ENCODE measurements at regions of chr1 and their contacts with region 1.

Region 1: GRCh38 chr1:155227261-155228095 is 19.0 kb downstream of the MTX1 start:
- DNase-seq: peak; percentile 96 to 100 (median 99)
- H3K4me3 ChIP-seq: peak overlapping the region in 6 of 7 experiments; percentile 68 to 85 (median 76)
- H3K27ac ChIP-seq: peak overlapping the region; percentile 74 to 85
- H3K4me1 ChIP-seq: peaks cover 8 to 43% (median 37%) of the 10 kb centered on the region in 4 experiments
- H3K27me3 ChIP-seq: no peaks in the 10 kb centered on the region

Region 2: DNA sequence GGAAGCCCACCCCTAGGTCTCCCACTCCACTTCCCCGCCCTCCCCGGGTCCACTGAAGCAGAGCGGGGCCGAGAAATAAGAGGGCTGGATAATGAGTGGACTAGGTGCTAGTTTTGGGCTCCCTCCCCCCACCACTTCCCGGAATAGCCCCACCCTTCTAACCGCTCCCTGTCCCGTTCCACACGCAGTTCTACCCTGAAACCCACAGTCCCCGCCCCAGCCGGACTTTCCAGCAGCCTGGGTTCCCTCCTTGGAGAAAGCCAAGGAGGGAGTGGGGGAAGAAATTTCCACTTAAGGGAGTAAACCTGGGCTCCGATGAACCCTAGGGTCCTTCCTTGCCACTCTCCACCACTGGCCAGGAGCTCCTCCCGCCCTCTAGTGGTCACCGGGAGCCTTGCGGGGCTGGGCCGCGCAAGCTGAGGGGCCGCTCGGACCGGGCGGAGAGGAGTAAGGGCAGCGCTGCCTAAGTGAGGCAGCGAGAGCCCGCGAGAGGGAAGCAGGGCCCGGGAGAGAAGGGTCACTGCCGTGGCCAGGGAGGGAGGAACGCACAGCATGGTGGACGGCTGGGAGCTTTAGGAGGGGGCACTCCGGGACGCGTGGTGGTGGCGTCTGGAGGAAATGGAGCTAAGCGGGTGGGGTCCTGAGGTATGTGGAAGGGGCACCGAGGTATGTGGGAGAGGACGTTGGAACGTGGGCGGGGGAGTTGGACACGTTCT is 34.0 kb before region 1 on chr1:
- CTCF ChIA-PET with region 1: interaction called, 11 read pairs
- POLR2A ChIA-PET with region 1: no interaction called
- DNase-seq: peak; percentile 79 to 84 (median 81)
- H3K4me3 ChIP-seq: peak overlapping the region; percentile 51 to 86 (median 74)
- H3K27ac ChIP-seq: peak overlapping the region; percentile 66 to 84
- H3K4me1 ChIP-seq: peaks cover 0 to 35% (median 32%) of the 10 kb centered on the region in 4 experiments
- H3K27me3 ChIP-seq: no peaks in the 10 kb centered on the region